ENCODE measurements at regions of chr15 and their contacts with region 1.

Region 1: DNA sequence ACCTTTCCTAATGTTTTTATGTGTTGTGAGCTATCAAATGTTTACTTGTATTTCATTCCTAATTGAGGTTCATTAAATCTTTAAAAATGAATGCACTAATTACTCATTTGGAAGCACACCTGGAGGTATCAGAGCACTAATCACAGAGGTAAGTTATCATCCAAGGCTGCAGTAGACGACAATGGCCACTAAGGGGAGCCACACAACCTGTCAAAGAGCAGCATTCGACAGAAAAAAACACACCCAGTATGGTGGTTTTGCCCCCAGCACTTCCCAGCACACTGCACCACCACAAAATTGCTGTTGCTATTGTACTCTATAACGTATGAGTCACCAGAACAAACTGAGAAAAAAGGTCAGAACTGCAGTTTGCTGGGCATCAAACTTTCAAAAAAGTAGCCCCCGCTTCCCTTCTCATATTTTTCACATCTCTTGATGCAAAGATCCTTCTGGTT is 205.9 kb upstream of the IGF1R start:
- DNase-seq: peak; percentile 79
- H3K4me3 Mint-ChIP-seq: no peak overlapping the region
- H3K27ac Mint-ChIP-seq: no peak overlapping the region
- H3K4me1 Mint-ChIP-seq: peaks cover 20% of the 10 kb centered on the region
- H3K27me3 Mint-ChIP-seq: peaks cover 35% of the 10 kb centered on the region
- CTCF ChIP-seq: peak; percentile 76

Region 2: GRCh38 chr15:98658831-98659699 is 216.7 kb after region 1 on chr15:
- CTCF ChIA-PET with region 1: no interaction called
- intact Hi-C with region 1: loop called (anchors 1 kb)
- DNase-seq: peak; percentile 71
- H3K4me3 Mint-ChIP-seq: no peak overlapping the region
- H3K27ac Mint-ChIP-seq: no peak overlapping the region
- H3K4me1 Mint-ChIP-seq: peaks cover 43% of the 10 kb centered on the region
- H3K27me3 Mint-ChIP-seq: no peaks in the 10 kb centered on the region
- CTCF ChIP-seq: peak; percentile 68

Region 3: DNA sequence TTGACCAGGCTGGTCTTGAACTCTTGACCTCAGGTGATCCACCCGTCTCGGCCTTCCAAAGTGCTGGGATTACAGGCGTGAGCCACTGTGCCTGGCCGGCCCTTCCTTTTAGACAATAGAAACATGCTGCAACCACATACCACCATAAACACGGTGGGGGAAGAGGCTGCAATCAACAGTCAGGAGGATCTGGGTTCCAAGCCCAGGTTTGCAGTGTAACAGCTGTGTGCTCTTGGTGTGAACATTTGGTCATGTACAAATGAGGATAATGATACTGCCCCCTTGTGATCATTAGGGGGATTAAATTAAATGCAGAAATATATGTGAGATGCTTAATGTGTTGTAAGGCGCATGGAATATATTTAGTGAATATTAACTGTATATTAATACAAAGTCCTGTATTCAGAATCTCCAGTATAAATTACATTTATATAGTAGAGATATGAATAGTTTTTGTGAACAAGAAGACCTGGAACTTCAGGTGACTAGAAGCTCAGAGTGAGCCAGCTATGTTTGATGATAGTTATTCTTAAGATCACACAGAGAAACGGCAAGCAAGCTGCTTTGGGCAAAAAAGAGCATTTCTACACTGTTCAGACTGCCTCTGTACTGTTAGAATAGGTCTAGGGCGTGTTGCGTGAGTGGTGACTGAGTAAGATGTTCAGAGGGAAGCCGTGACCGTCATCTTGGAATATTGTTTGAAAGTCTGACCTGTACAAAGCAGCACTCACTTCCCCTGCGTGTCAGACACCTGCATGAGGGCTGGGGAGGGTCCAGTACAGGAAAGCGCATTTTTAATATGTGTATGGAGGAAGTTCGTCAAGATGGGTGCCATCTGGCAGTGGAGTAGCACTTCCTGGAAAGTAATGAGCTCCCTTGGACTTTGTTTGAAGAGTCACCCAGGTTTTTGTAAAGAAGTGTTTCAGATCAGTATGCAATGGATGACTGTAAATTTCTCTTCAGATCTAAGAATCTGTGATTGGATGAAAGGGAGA is 439.4 kb after region 1 on chr15:
- CTCF ChIA-PET with region 1: no interaction called
- intact Hi-C with region 1: loop called (anchors 2 kb)
- DNase-seq: no peak
- H3K4me3 Mint-ChIP-seq: no peak overlapping the region
- H3K27ac Mint-ChIP-seq: no peak overlapping the region
- H3K4me1 Mint-ChIP-seq: no peaks in the 10 kb centered on the region
- H3K27me3 Mint-ChIP-seq: no peaks in the 10 kb centered on the region
- CTCF ChIP-seq: peak; percentile 61

Region 4: GRCh38 chr15:99059010-99059981 is 616.9 kb after region 1 on chr15:
- CTCF ChIA-PET with region 1: no interaction called
- intact Hi-C with region 1: loop called (anchors 5 kb)
- DNase-seq: peak; percentile 81
- H3K4me3 Mint-ChIP-seq: peak overlapping the region; percentile 59
- H3K27ac Mint-ChIP-seq: no peak overlapping the region
- H3K4me1 Mint-ChIP-seq: no peaks in the 10 kb centered on the region
- H3K27me3 Mint-ChIP-seq: peaks cover 87% of the 10 kb centered on the region
- CTCF ChIP-seq: peak; percentile 89

Region 5: GRCh38 chr15:99213187-99213811 is 770.9 kb after region 1 on chr15:
- CTCF ChIA-PET with region 1: no interaction called
- intact Hi-C with region 1: loop called (anchors 1 kb)
- DNase-seq: peak; percentile 79
- H3K4me3 Mint-ChIP-seq: no peak overlapping the region
- H3K27ac Mint-ChIP-seq: no peak overlapping the region
- H3K4me1 Mint-ChIP-seq: no peaks in the 10 kb centered on the region
- H3K27me3 Mint-ChIP-seq: no peaks in the 10 kb centered on the region
- CTCF ChIP-seq: peak; percentile 73